ENCODE measurements at regions of chr9 and their contacts with region 1.

Region 1: DNA sequence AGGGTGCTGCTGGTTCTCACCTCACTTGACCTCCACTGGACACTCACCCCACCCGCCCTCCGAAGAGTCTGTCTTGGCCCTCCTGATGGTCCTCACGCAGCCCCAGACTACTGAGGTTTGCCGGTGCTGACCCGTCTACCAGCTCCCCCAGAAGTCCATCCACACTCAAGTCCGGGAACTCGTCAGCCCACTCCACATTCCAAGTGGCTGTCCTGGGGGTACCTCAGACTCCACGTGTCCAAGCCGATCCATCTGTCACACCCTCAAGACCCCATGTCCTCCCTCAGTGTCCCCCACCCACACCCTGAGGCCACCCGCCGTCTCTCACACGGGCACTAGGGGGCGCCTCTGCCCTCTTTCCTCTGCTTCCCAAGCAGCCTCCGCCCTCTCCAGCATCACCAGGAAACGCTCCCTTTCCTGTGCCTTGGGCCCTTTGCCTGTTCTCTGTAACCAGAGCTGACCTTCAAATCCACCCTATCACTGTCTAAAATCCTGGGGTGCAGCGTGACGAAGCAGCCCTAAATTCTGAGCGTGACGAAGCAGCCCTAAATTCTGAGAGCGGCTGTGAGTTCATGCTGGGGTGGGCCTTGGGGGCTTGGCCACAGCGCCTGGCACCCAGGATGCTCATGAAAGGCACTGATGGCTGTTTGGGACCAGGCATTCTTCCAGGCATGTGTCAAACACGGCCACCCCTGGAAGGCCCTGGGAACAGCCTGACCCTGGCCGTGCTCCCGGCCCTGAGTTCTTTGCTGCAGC is 95.7 kb downstream of the KCNT1 start:
- DNase-seq: peak; percentile 88
- ATAC-seq: peak; percentile 91
- H3K4me3 Mint-ChIP-seq: no peak overlapping the region
- H3K27ac Mint-ChIP-seq: no peak overlapping the region
- H3K4me1 Mint-ChIP-seq: no peaks in the 10 kb centered on the region
- H3K27me3 Mint-ChIP-seq: no peaks in the 10 kb centered on the region
- CTCF ChIP-seq: peak; percentile 92

Region 2: DNA sequence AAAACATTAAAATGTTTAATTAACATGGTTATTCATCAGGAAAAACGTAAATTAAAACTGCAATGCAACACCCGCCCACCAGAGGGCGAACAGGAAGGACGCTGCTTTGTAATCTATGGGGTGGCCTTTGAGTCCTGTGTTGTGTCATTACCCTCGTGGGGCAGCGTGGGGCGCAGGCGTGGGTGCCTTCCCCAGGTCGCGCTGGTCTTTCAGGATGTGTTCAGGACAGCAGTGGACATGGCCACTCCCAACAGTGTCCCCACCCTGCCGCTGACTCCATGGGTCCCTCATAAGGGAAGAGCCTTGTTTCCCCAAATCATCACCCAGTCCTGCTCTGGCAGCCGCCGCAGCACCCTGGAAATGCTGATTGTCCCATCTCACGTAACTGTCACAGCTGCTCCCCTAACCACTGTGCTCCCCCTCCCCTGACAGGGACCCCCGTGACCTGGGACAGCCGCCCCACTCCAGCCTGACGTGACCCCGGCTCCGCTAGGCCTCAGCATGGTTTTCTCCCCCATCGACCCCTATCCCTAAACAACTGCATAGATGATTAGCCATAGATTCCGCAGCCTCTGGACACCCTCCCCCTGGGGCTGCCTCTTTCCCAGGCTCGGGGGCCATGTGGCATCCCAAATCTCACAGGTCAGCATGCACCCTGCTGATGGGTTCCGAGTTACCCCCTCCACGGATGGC is 194.8 kb before region 1 on chr9:
- CTCF ChIA-PET with region 1: interaction called, 17 read pairs
- POLR2A ChIA-PET with region 1: no interaction called
- DNase-seq: peak; percentile 70
- ATAC-seq: peak; percentile 21; the same call in 1 of the 2 replicates
- H3K4me3 Mint-ChIP-seq: no peak overlapping the region
- H3K27ac Mint-ChIP-seq: no peak overlapping the region
- H3K4me1 Mint-ChIP-seq: peaks cover 10% of the 10 kb centered on the region
- H3K27me3 Mint-ChIP-seq: no peaks in the 10 kb centered on the region
- CTCF ChIP-seq: peak; percentile 90

Region 3: DNA sequence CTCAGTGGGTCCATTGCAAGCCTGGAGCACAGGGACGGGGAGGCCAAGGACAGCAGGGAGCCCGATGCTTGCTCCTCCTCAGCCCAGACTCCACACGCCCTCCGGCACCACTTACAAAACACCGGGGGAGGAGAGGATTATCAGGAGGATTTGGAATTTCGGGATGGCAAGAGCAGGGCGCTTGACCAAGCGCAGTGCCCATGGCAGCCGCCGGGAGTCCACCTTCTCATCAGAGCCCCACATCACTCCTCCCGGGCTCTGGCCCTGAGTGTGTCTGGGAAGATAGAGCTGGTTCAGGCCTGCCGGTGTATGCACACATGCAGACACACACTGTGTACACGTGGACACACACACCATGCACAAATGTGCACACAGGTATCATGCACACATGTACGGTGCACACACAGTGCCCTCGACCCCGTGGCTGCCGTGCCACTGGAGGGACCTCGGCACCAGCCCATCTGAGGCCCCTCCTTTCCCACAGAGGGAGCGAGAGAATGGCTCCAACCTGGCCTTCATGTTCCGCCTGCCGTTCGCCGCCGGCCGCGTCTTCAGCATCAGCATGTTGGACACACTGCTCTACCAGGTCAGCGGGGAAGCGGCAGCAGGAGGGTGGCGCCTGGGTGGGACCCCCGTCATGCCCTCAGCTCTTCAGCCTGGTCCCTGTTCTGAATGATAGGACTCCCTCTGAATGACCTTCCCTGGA is 14.0 kb before region 1 on chr9:
- CTCF ChIA-PET with region 1: interaction called, 27 read pairs
- POLR2A ChIA-PET with region 1: no interaction called
- DNase-seq: no peak
- ATAC-seq: no peak
- H3K4me3 Mint-ChIP-seq: no peak overlapping the region
- H3K27ac Mint-ChIP-seq: no peak overlapping the region
- H3K4me1 Mint-ChIP-seq: no peaks in the 10 kb centered on the region
- H3K27me3 Mint-ChIP-seq: no peaks in the 10 kb centered on the region
- CTCF ChIP-seq: no peak